CD4-positive, alpha-beta memory T cell (primary cell): ENCODE measurements at regions of chr3 and their contacts with region 1.

Region 1: DNA sequence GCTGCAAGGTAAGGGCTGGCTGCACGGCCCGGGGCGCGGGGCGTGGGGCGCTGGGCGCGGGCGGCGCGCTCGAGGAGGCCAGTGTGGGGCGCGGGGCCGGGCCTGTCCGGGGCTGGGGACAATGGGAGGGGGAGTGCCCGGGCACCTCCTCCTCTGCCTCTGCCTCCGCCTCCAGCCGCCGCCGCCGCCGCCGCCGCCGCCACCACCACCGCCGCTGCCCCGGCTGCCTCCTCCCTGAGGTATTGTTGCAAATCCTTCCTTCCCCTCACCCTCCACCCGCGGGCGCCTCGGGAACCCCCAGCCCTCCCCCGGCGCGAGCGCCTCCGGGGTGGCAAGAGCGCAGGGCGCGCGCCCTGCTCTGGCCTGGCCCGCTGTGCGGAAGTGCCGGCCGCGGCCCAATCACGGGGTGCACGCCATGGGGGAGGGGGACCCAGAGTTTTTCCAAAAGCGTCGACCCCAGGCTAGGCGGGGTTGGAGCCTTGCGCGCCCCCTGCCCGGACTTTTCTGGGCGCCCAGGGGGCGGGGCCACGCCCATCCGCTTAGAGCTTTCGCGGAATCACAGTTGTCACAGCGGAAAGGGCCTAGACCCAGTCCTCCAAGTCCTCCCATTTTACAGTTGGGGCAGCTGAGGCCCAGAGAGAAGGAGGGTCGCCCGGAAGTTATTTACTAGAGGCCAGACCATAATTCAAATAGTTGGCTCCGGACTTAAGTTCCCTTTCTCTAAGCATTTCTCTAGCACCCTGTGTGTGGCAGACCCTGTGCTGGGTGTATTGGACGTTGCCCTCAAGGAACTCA is at the start of gene LPP:
- DNase-seq: peak; percentile 80 to 94 (median 83)
- H3K4me3 ChIP-seq: peak within 1 kb of the TSS; percentile 67 to 79
- H3K4me3 Mint-ChIP-seq: peak within 1 kb of the TSS; percentile 86 to 96 (median 91)
- H3K27ac ChIP-seq: peak within 1 kb of the TSS; percentile 76
- H3K27ac Mint-ChIP-seq: peak within 1 kb of the TSS; percentile 91 to 96 (median 92)
- H3K4me1 ChIP-seq: peaks cover 53% of the 10 kb centered on the region
- H3K4me1 Mint-ChIP-seq: peaks cover 44 to 72% (median 53%) of the 10 kb centered on the region in 4 donors
- H3K27me3 ChIP-seq: no peaks in the 10 kb centered on the region
- H3K27me3 Mint-ChIP-seq: no peaks in the 10 kb centered on the region
- total RNA-seq, gene LPP: 24.3 to 25.0 TPM

Region 2: GRCh38 chr3:187994221-187995042 is 159.8 kb before region 1 on chr3:
- CTCF ChIA-PET with region 1: no interaction called
- POLR2A ChIA-PET with region 1: interaction called, 3 read pairs
- intact Hi-C with region 1: loop called (anchors 5 kb)
- DNase-seq: peak; percentile 51 to 69 (median 60)
- H3K4me3 ChIP-seq: peak overlapping the region in 1 of 2 donors; percentile 11
- H3K4me3 Mint-ChIP-seq: peak overlapping the region in 7 of 8 donors; percentile 59 to 86 (median 76)
- H3K27ac ChIP-seq: no peak overlapping the region
- H3K27ac Mint-ChIP-seq: peak overlapping the region; percentile 72 to 94 (median 88)
- H3K4me1 ChIP-seq: peaks cover 70% of the 10 kb centered on the region
- H3K4me1 Mint-ChIP-seq: peaks cover 65 to 82% (median 72%) of the 10 kb centered on the region in 4 donors
- H3K27me3 ChIP-seq: no peaks in the 10 kb centered on the region
- H3K27me3 Mint-ChIP-seq: no peaks in the 10 kb centered on the region

Region 3: DNA sequence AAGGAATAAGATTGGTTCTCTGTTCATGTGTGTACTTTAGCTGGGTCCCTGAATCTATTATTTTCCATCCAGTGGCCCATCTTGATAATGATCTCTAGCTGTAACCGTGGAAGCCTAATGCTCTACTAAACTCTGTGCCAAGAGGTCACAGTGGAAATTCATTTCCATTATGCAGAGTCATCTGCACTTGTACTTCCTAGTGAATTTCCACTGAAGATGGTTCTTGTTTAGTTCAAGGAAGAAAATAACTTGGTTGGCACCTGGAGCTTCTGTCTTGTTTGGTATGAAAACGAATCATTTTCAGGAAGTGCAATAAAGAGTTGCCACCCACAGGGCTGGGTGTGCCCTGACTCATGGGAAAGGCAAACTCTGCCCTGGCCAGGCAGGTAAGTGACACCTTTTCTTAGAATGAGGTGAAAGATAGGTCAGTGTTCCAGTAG is 10.1 kb after region 1 on chr3:
- CTCF ChIA-PET with region 1: no interaction called
- POLR2A ChIA-PET with region 1: interaction called, 21 read pairs
- intact Hi-C with region 1: no loop called
- DNase-seq: no peak
- H3K4me3 ChIP-seq: no peak overlapping the region
- H3K4me3 Mint-ChIP-seq: peak overlapping the region; percentile 11 to 66 (median 56)
- H3K27ac ChIP-seq: no peak overlapping the region
- H3K27ac Mint-ChIP-seq: peak overlapping the region in 5 of 7 donors; percentile 38 to 83 (median 58)
- H3K4me1 ChIP-seq: peaks cover 29% of the 10 kb centered on the region
- H3K4me1 Mint-ChIP-seq: peaks cover 40 to 56% (median 48%) of the 10 kb centered on the region in 4 donors
- H3K27me3 ChIP-seq: no peaks in the 10 kb centered on the region
- H3K27me3 Mint-ChIP-seq: no peaks in the 10 kb centered on the region

Region 4: DNA sequence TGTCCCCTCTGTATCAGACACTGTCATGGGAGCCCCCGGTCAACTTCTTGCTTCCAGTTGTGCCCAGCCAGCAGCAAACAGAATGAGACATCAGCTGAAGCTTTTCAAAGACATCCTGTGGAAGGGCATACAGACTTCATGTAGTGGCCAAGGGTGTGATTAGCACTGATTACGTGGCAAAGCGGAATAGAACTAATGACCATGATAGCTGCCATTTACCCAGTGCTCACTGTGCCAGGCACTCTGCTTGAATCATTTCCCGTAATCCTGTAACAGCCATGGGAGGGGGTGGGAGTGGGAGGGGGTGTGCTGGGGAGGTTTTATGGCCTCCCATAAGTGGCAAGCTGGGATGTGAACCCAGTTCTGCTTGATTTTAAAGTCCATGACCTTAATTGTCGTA is 29.2 kb after region 1 on chr3:
- CTCF ChIA-PET with region 1: no interaction called
- POLR2A ChIA-PET with region 1: no interaction called
- intact Hi-C with region 1: no loop called
- DNase-seq: no peak
- H3K4me3 ChIP-seq: no peak overlapping the region
- H3K4me3 Mint-ChIP-seq: no peak overlapping the region
- H3K27ac ChIP-seq: no peak overlapping the region
- H3K27ac Mint-ChIP-seq: peak overlapping the region in 1 of 7 donors; percentile 29
- H3K4me1 ChIP-seq: peaks cover 35% of the 10 kb centered on the region
- H3K4me1 Mint-ChIP-seq: peaks cover 28 to 56% (median 40%) of the 10 kb centered on the region in 4 donors
- H3K27me3 ChIP-seq: no peaks in the 10 kb centered on the region
- H3K27me3 Mint-ChIP-seq: no peaks in the 10 kb centered on the region